Testis (tissue), 5 donors: ENCODE measurements at regions of chr2 and their contacts with region 1.

Region 1: GRCh38 chr2:169824373-169825333 is at the start of gene METTL5:
- DNase-seq: peak; percentile 90
- H3K4me3 ChIP-seq: peak within 1 kb of the TSS; percentile 82 to 88
- H3K27ac ChIP-seq: peak within 1 kb of the TSS; percentile 82 to 84
- H3K4me1 ChIP-seq: peaks cover 12% of the 10 kb centered on the region
- H3K27me3 ChIP-seq: no peaks in the 10 kb centered on the region
- CTCF ChIP-seq: peak; percentile 93 to 97 (median 94)
- POLR2A ChIP-seq: peak; percentile 13
- total RNA-seq, gene METTL5: 35.8 to 48.2 TPM

Region 2: GRCh38 chr2:169562519-169562918 is 262.1 kb before region 1 on chr2:
- intact Hi-C with region 1: no loop called
- DNase-seq: no peak
- H3K4me3 ChIP-seq: no peak overlapping the region
- H3K27ac ChIP-seq: no peak overlapping the region
- H3K4me1 ChIP-seq: no peaks in the 10 kb centered on the region
- H3K27me3 ChIP-seq: no peaks in the 10 kb centered on the region
- CTCF ChIP-seq: no peak
- POLR2A ChIP-seq: no peak

Region 3: DNA sequence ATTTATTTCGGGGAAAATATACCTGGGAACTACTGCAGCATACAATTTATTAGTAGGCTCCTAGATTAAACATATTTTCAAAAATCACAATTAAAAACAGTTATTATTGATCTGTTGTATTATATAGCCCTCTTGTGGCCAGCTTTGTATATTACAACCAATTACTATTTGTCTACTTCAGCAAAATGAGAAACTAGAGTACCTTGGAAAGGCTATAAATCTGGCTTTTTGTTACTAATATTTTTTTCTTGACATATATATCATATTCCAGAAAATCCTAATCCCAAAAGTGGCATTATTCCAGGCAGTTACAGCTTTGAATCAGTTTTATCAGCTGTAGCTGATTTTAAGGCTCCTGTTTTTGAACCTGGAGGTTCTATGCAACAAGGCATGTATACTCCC is 103.8 kb after region 1 on chr2:
- intact Hi-C with region 1: loop called (anchors 10 kb)
- DNase-seq: no peak
- H3K4me3 ChIP-seq: no peak overlapping the region
- H3K27ac ChIP-seq: no peak overlapping the region
- H3K4me1 ChIP-seq: no peaks in the 10 kb centered on the region
- H3K27me3 ChIP-seq: no peaks in the 10 kb centered on the region
- CTCF ChIP-seq: peak; percentile 45 to 78 (median 52)
- POLR2A ChIP-seq: no peak